Activated naive CD4-positive, alpha-beta T cell treated with anti-CD3 and anti-CD28 coated beads for 36 hours (primary cell): ENCODE measurements at regions of chr5 and their contacts with region 1.

Region 1: GRCh38 chr5:131796793-131797693 is at the start of gene FNIP1:
- DNase-seq: peak; percentile 99
- H3K4me3 Mint-ChIP-seq: peak within 1 kb of the TSS; percentile 97
- H3K27ac Mint-ChIP-seq: peak within 1 kb of the TSS; percentile 78
- H3K4me1 Mint-ChIP-seq: peaks cover 19% of the 10 kb centered on the region
- H3K27me3 Mint-ChIP-seq: no peaks in the 10 kb centered on the region
- total RNA-seq, gene FNIP1: 16.8 to 17.8 TPM

Region 2: GRCh38 chr5:131270809-131271208 is 526.2 kb before region 1 on chr5:
- CTCF ChIA-PET with region 1: no interaction called
- intact Hi-C with region 1: loop called (anchors 5 kb)
- DNase-seq: no peak
- H3K4me3 Mint-ChIP-seq: peak overlapping the region; percentile 50
- H3K27ac Mint-ChIP-seq: peak overlapping the region; percentile 97
- H3K4me1 Mint-ChIP-seq: peaks cover 75% of the 10 kb centered on the region
- H3K27me3 Mint-ChIP-seq: no peaks in the 10 kb centered on the region

Region 3: GRCh38 chr5:131536211-131536826 is 260.7 kb before region 1 on chr5:
- CTCF ChIA-PET with region 1: no interaction called
- intact Hi-C with region 1: loop called (anchors 2 kb)
- DNase-seq: peak; percentile 39
- H3K4me3 Mint-ChIP-seq: peak overlapping the region; percentile 49
- H3K27ac Mint-ChIP-seq: peak overlapping the region; percentile 80
- H3K4me1 Mint-ChIP-seq: peaks cover 81% of the 10 kb centered on the region
- H3K27me3 Mint-ChIP-seq: no peaks in the 10 kb centered on the region

Region 4: DNA sequence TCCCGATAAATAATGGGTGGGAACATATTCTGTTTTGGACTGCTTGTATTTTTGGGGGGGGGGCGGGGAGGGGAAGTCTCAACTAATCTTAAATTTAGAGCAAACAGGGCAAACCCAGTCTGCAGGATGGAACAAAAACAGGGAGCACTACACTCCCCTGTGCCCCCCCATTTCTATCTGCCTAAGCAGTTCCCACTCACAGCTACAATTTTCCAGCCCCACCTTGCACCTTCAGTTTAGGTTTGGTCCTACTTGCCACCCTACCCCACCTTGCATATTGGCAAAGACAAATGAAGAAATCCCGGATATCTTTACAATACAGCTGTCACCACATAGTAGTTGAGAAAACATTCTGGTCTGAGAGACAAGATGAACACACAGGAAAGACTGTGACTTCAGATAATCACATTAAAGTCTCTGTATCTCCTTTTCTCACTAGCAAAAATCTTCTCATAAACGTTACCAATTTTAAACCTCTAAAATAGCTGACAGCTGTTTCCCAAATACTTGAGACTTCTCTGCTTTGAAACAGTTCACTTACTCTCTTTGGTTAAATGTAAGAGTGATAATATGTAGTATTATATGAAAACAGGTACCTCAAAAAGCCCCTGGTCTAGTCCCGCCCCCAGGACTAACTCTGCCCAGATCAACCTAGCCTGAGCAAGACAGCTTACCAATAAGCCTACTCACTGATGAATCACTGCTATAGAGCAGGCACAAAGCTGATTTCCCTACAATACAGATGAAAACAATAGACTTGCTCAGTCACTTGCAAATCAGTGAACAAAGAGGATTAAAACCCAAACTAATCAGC is 156.8 kb before region 1 on chr5:
- CTCF ChIA-PET with region 1: no interaction called
- intact Hi-C with region 1: loop called (anchors 1 kb)
- DNase-seq: peak; percentile 90
- H3K4me3 Mint-ChIP-seq: peak overlapping the region; percentile 59
- H3K27ac Mint-ChIP-seq: peak overlapping the region; percentile 94
- H3K4me1 Mint-ChIP-seq: peaks cover 29% of the 10 kb centered on the region
- H3K27me3 Mint-ChIP-seq: no peaks in the 10 kb centered on the region

Region 5: DNA sequence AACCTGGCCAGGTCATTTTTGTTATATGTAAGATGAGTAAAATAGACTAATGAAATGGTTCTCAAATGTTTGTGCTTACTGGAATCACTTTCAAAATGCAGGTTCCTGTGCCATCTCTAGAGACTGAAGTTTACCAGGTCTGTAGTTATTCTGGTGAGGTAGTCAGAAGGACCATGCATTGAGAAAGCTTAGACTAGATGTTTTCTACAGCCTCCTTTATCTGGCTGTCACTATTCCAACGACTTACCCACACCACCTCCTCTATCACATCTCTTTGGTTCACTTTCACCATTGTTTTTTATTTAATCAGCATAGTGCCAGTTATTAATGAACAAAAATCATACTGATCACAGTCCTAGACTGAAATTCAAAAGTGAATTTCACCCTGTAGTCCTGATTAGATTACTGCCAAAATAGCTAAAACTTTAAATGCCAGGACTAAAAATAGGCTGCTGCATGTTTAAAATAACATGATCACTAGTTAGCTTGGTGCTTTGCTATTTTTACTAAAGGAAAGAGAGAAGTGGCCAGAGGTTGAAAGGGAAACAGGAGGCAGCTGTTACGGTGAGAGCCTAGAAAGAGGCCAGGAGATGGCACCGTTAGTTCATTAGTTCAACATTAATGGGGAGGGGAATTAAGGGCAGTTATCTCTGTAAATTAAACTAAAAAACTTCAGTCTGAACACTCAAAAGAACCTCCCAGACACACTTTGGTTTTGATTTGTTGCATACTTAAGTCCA is 13.6 kb after region 1 on chr5:
- CTCF ChIA-PET with region 1: no interaction called
- intact Hi-C with region 1: no loop called
- DNase-seq: peak; percentile 31
- H3K4me3 Mint-ChIP-seq: no peak overlapping the region
- H3K27ac Mint-ChIP-seq: no peak overlapping the region
- H3K4me1 Mint-ChIP-seq: no peaks in the 10 kb centered on the region
- H3K27me3 Mint-ChIP-seq: no peaks in the 10 kb centered on the region

Region 6: DNA sequence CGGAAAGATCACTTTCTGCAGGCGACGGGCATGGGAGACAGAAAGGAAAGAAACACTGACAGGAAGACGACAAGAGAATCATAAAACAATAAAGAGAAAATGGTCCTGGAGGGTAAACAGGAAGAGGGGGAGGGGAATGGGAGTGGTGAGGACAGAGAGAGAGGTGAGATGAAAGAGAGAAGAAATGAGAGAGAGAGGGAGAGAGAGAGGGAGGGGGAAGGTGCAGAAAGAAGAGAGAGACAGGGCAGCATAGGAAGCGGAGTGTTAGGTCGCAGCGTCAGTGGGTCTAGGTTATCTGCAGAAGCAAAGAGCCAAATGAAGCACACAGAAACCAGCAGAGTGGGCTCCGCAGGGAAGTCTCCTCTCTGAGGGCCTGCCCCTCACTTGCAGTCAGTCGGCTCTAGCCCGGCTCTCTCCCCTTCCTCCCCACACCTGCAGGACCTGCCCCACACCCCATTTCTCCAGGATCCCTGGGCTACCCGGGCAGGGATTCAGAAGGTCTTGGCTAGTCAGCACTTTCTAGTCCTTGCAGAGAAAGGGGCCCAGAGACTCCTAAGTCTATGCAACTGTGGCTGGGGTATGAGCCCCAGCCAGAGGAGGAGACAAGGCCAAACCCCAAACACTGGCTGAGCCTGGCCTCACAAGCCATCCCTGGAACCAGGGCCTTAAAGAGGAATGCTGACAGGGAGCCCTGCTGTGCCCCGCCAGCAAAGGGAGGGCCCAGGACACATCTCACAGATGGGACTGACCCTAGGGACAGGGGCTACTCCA is 178.1 kb after region 1 on chr5:
- CTCF ChIA-PET with region 1: no interaction called
- intact Hi-C with region 1: loop called (anchors 1 kb)
- DNase-seq: peak; percentile 53
- H3K4me3 Mint-ChIP-seq: peak overlapping the region; percentile 49
- H3K27ac Mint-ChIP-seq: peak overlapping the region; percentile 70
- H3K4me1 Mint-ChIP-seq: peaks cover 46% of the 10 kb centered on the region
- H3K27me3 Mint-ChIP-seq: no peaks in the 10 kb centered on the region

Region 7: GRCh38 chr5:132103332-132103951 is 306.4 kb after region 1 on chr5:
- CTCF ChIA-PET with region 1: no interaction called
- intact Hi-C with region 1: loop called (anchors 1 kb)
- DNase-seq: peak; percentile 84
- H3K4me3 Mint-ChIP-seq: no peak overlapping the region
- H3K27ac Mint-ChIP-seq: peak overlapping the region; percentile 73
- H3K4me1 Mint-ChIP-seq: peaks cover 60% of the 10 kb centered on the region
- H3K27me3 Mint-ChIP-seq: no peaks in the 10 kb centered on the region